GM18951 (cell line): ENCODE measurements at regions of chr4 and their contacts with region 1.

Region 1: DNA sequence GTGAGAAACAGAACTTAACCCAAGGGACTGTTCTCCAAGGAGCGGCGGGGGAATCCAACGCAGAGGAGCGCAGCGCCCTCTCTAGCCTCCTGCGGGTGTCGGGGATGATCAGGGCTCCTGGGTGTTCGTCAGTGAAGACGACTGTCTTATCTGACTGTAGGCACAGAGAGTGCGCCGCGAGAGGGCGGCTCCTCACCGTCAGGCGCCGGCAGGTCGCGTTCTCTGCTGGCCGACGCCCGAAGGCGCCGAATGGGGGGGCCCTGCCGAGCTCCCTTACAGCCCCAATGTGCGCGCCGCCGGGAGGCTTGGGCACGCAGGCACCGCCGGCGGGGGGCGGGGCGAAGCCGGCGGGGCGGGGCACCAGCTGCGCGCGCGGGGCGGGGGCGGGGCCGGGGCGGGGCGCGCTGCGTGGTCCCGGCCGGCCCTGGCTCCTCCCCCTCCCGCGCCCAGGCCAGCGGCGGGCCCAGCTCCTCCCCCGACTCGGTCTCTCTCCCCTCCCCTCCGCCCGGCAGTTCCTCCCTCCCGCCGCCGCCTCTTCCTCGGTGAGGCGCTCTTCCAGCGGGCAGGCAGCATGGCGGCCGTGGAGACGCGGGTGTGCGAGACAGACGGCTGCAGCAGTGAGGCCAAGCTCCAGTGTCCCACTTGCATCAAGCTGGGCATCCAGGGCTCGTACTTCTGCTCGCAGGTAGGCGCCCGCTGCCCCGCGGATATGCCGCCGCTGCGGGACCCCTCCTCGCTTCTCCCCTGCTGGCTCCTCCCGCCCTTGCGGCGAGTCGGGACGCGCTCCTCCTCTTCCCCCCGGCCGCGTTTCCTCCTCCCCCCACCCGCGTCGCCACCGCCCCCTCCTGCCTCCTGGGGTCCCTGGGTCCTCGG is at the start of gene METAP1:
- POLR2A ChIP-seq: peak; percentile 88

Region 2: DNA sequence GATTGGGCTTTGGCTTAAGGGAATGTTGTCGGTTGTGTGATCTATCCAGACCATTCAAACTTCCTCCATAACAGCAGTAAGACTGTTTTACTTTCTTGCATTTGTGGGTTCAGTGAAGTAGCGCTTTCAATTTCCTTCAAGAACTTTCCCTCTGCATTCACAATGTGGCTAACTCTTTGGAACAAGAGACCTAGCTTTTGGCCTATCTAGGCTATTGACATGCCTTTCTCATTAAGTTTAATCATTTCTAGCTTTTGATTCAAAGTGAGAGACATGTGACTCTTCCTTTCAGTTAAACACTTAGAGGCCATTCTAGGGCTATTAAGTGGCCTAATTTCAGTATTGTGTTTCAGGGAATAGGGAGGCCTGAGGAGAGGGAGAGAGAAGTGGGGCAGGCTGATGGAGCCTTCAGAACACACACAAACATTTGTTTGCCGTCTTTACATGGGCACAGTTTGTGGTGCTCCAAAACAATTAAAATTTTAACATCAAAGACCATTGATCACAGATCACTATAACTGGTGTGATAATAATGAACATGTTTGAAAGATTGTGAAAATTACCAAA is 59.1 kb after region 1 on chr4:
- in situ Hi-C with region 1: loop called (anchors 10 kb)
- POLR2A ChIP-seq: no peak

Region 3: DNA sequence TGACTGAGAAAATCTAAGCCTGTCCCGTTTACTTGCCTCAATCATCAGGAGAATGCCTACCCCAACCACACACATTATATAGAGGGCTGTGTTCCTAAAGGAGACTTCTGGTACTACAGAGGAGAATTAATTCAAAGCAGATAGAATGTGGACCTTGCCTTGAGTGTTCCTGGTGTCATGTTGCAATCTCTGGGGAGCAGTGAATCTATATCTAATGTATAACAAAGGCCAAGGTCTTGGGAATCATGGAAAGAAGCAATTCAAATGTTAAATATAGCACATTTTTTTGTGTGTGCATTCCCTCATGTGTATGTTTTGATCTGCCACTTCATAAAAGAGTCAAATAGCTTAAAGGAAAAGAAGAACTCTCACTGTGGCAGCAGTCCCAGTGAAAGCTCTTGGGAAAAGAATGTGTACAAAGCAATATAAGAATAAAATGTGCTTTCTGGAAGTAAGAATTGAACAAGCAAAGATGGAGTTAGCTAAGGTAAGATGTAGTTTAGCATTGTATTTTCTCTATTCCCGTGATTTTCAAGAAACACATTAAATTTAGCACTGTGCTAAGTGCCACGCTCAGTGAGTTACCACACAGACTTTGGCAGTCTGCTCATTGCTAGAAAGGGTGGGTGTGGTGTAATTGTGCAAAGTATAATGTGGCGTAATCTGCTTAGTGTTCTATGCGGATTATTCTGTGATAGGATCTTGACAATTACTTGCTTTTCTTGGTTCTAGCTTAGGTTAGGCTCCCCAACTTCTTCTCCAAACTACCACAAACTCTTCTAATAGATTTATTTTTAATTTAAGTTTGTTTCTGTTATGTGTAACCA is 209.9 kb after region 1 on chr4:
- in situ Hi-C with region 1: no loop called
- POLR2A ChIP-seq: no peak